AG04450 (cell line): ENCODE measurements at regions of chr7 and their contacts with region 1.

Region 1: DNA sequence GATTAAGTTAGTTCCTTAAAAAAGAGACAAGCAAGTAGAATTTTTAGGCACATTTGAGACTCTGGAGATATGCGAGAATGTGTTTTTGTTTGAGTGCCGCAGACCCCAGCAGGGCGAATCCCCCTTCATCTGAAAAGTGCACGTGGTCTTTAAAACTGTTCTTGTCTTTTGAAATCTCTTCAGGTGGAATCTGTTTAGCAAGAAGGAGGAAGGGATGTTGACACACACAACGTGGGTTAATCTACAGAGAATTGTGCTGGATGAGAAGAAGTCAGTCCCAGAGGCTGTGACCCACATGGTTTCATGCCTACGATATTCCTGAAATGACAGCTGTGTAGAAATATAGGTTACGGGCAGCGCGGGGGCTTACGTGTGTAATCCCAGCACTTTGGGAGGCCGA is 27.1 kb upstream of the ZFAND2A start:
- DNase-seq: no peak
- H3K4me3 ChIP-seq: no peak overlapping the region
- H3K27ac ChIP-seq: no peak overlapping the region
- H3K27me3 ChIP-seq: peaks cover 7% of the 10 kb centered on the region
- CTCF ChIP-seq: no peak

Region 2: GRCh38 chr7:1175967-1176851 is 10.9 kb before region 1 on chr7:
- CTCF ChIA-PET with region 1: interaction called, 15 read pairs
- POLR2A ChIA-PET with region 1: no interaction called
- DNase-seq: no peak
- H3K4me3 ChIP-seq: peak overlapping the region; percentile 20; the same call in 1 of the 2 replicates
- H3K27ac ChIP-seq: peak overlapping the region; percentile 39
- H3K27me3 ChIP-seq: peaks cover 6% of the 10 kb centered on the region
- CTCF ChIP-seq: peak; percentile 86

Region 3: GRCh38 chr7:1853986-1854865 is 667.1 kb after region 1 on chr7:
- CTCF ChIA-PET with region 1: no interaction called
- POLR2A ChIA-PET with region 1: no interaction called
- DNase-seq: no peak
- H3K4me3 ChIP-seq: no peak overlapping the region
- H3K27ac ChIP-seq: no peak overlapping the region
- H3K27me3 ChIP-seq: no peaks in the 10 kb centered on the region
- CTCF ChIP-seq: no peak